ENCODE measurements at regions of chr13 and their contacts with region 1.

Region 1: GRCh38 chr13:104773775-104774174 is 1707.6 kb upstream of the SLC10A2 start:
- DNase-seq: peak; percentile 54
- H3K4me3 ChIP-seq: no peak overlapping the region
- H3K27ac ChIP-seq: no peak overlapping the region
- H3K4me1 ChIP-seq: no peaks in the 10 kb centered on the region
- H3K27me3 ChIP-seq: no peaks in the 10 kb centered on the region
- CTCF ChIP-seq: peak; percentile 59 to 61
- POLR2A ChIP-seq: no peak

Region 2: DNA sequence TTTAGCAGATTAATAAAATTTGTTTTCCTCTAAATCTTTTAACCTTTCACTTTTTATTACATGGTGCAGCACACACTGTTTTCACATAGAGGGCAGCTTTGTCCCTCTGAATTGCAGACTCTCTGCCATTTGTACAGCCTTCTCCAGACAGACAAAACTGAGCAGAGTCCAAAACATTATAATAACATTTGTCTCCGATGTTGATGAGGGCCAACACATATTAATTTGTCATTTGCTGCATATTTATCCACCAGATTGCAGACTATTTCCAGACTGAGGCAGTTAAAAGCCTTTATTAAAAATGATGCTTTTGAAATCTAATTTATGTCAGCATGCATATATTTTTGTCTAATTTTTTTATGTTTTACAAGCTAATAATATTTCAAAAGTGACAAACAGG is 455.7 kb before region 1 on chr13:
- CTCF ChIA-PET with region 1: interaction called, 3 read pairs
- POLR2A ChIA-PET with region 1: no interaction called
- dilution Hi-C with region 1: no loop called
- intact Hi-C with region 1: loop called (anchors 1 kb)
- DNase-seq: peak; percentile 43
- H3K4me3 ChIP-seq: no peak overlapping the region
- H3K27ac ChIP-seq: no peak overlapping the region
- H3K4me1 ChIP-seq: peaks cover 14% of the 10 kb centered on the region
- H3K27me3 ChIP-seq: no peaks in the 10 kb centered on the region
- CTCF ChIP-seq: peak; percentile 27 to 38
- POLR2A ChIP-seq: no peak

Region 3: GRCh38 chr13:104757712-104758111 is 16.1 kb before region 1 on chr13:
- CTCF ChIA-PET with region 1: interaction called, 29 read pairs
- POLR2A ChIA-PET with region 1: no interaction called
- dilution Hi-C with region 1: no loop called
- intact Hi-C with region 1: no loop called
- DNase-seq: peak; percentile 62
- H3K4me3 ChIP-seq: no peak overlapping the region
- H3K27ac ChIP-seq: no peak overlapping the region
- H3K4me1 ChIP-seq: no peaks in the 10 kb centered on the region
- H3K27me3 ChIP-seq: no peaks in the 10 kb centered on the region
- CTCF ChIP-seq: no peak
- POLR2A ChIP-seq: no peak

Region 4: DNA sequence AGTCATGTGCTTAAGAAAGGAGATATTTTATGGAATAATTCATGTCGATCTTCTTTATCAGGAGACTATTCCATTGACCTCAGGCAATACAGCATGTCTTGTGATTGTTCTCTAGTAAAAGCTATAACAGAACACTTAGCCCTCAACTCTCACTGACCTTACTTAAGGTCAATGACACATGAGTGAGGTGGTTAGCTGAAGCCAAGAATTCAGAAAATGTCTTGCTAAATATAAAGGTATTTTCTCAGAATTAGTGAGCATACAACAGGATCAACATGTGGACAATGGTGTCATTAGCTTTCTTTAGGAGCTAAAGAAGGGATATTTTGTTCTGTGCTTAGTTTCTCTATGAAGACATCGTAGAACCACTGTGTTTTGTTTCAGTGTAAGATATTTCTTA is 22.8 kb after region 1 on chr13:
- CTCF ChIA-PET with region 1: interaction called, 10 read pairs
- POLR2A ChIA-PET with region 1: no interaction called
- dilution Hi-C with region 1: no loop called
- intact Hi-C with region 1: no loop called
- DNase-seq: no peak
- H3K4me3 ChIP-seq: no peak overlapping the region
- H3K27ac ChIP-seq: no peak overlapping the region
- H3K4me1 ChIP-seq: no peaks in the 10 kb centered on the region
- H3K27me3 ChIP-seq: no peaks in the 10 kb centered on the region
- CTCF ChIP-seq: no peak
- POLR2A ChIP-seq: no peak

Region 5: DNA sequence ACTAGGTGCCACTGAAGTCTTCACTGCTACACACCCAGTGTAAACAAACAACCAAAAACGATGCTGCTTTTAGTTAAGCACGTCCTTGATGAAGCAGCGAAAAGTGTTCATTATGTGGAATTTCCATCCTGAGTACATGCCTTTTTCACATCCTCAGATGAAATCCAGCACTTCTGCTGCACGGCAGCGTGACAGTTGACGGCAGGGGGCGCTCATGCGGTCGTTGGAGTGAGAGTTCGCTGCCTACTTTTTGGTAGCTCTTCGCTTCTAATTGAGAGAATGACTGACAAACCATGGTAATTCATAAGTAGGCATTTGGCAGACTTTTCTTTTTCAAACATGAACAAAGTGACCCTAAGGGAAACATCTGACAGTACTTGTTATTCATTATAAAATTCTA is 636.8 kb after region 1 on chr13:
- CTCF ChIA-PET with region 1: interaction called, 7 read pairs
- POLR2A ChIA-PET with region 1: no interaction called
- dilution Hi-C with region 1: no loop called
- intact Hi-C with region 1: loop called (anchors 10 kb)
- DNase-seq: peak; percentile 52
- H3K4me3 ChIP-seq: peak overlapping the region in 1 of 3 experiments; percentile 55
- H3K27ac ChIP-seq: no peak overlapping the region
- H3K4me1 ChIP-seq: no peaks in the 10 kb centered on the region
- H3K27me3 ChIP-seq: no peaks in the 10 kb centered on the region
- CTCF ChIP-seq: peak; percentile 68 to 80
- POLR2A ChIP-seq: no peak

Measured in endothelial cell of umbilical vein (primary cell).